Endothelial cell of umbilical vein (primary cell): ENCODE measurements at regions of chr3 and their contacts with region 1.

Region 1: DNA sequence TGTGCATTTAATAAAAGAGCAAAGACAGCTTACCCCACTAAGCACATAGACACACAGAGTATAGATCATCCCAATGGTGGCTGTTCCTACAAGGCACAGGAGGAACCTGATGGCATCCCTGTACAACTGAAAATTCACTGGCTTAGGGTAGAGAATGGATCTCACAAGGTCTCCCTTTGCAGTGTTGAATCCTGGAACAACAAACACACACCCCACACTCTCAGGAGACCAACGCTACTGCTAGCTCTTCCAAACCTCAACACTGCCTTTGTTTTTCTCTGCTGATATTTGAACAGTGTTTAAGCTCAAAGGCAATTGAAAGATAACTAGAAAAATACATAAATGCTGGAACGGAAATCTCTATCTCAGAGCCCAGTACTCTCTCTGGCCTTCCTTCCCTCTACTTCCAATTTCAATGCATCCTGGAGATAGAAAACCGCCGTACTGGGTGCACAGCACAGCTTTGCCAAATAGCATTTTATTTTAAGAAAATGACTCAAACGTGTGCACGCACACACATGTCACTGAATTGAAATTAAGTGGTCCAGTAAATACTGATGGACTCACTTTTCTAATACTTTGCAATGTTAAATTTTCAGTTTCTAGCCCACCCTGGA is 87.5 kb upstream of the ATP13A5 start:
- DNase-seq: no peak
- H3K4me3 ChIP-seq: no peak overlapping the region
- H3K27ac ChIP-seq: no peak overlapping the region
- H3K4me1 ChIP-seq: peaks cover 5% of the 10 kb centered on the region
- H3K27me3 ChIP-seq: peaks cover 0 to 2% of the 10 kb centered on the region in 2 experiments
- CTCF ChIP-seq: no peak
- POLR2A ChIP-seq: no peak

Region 2: GRCh38 chr3:193190146-193190786 is 275.8 kb before region 1 on chr3:
- CTCF ChIA-PET with region 1: no interaction called
- POLR2A ChIA-PET with region 1: no interaction called
- dilution Hi-C with region 1: no loop called
- intact Hi-C with region 1: loop called (anchors 2 kb)
- DNase-seq: peak; percentile 56
- H3K4me3 ChIP-seq: no peak overlapping the region
- H3K27ac ChIP-seq: no peak overlapping the region
- H3K4me1 ChIP-seq: no peaks in the 10 kb centered on the region
- H3K27me3 ChIP-seq: peaks cover 0 to 9% of the 10 kb centered on the region in 2 experiments
- CTCF ChIP-seq: peak; percentile 45 to 59
- POLR2A ChIP-seq: no peak

Region 3: GRCh38 chr3:193240850-193241706 is 225.0 kb before region 1 on chr3 and contains the start of gene PLAAT1:
- CTCF ChIA-PET with region 1: no interaction called
- POLR2A ChIA-PET with region 1: no interaction called
- dilution Hi-C with region 1: no loop called
- intact Hi-C with region 1: loop called (anchors 5 kb)
- DNase-seq: peak; percentile 62
- H3K4me3 ChIP-seq: peak within 1 kb of the TSS in 2 of 3 experiments; percentile 52 to 66
- H3K27ac ChIP-seq: no peak within 1 kb of the TSS
- H3K4me1 ChIP-seq: peaks cover 5% of the 10 kb centered on the region
- H3K27me3 ChIP-seq: peaks cover 3 to 15% of the 10 kb centered on the region in 2 experiments
- CTCF ChIP-seq: no peak
- POLR2A ChIP-seq: no peak
- total RNA-seq, gene PLAAT1: 0.58 and 0.75 TPM in 2 replicates

Region 4: DNA sequence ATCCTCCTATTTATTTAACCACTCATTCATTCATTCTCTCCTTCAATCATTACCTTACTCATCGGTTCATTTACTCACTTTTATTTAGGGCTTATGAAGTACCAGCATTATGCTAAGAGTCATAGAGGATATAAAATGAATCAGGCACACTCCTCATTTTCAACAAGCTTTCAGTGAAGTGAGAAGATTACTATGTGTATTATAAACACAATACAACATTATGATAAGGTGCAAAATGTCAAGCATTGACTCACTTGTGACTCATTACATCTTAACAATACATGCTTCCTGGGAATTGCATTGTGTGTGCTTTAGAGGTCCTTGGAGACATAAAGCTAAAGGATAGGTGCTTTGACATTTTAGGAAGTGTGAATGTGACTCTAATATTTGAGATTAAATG is 164.7 kb before region 1 on chr3:
- CTCF ChIA-PET with region 1: no interaction called
- POLR2A ChIA-PET with region 1: no interaction called
- dilution Hi-C with region 1: no loop called
- intact Hi-C with region 1: loop called (anchors 2 kb)
- DNase-seq: peak; percentile 85
- H3K4me3 ChIP-seq: no peak overlapping the region
- H3K27ac ChIP-seq: no peak overlapping the region
- H3K4me1 ChIP-seq: peaks cover 8% of the 10 kb centered on the region
- H3K27me3 ChIP-seq: no peaks in the 10 kb centered on the region
- CTCF ChIP-seq: no peak
- POLR2A ChIP-seq: no peak

Region 5: DNA sequence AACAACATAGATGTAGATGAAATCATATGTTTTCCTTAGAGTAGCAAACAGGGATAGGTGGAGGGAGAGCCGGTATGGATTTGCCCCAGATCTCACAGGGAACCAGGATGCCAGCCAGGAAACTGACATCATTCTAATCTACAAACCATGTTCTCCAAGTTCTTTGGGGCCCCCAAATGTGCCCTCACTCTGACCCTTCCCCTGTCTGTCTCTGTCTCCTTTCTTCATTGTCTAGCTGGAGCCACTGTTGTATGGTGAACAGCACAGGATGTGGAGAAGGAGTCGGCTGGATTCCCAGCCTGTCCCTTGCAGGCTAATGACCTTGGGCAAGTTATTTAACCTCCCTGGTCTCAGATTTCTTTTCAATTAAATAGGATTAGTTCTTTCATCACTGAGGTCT is 88.5 kb before region 1 on chr3:
- CTCF ChIA-PET with region 1: no interaction called
- POLR2A ChIA-PET with region 1: no interaction called
- dilution Hi-C with region 1: no loop called
- intact Hi-C with region 1: no loop called
- DNase-seq: peak; percentile 8
- H3K4me3 ChIP-seq: no peak overlapping the region
- H3K27ac ChIP-seq: no peak overlapping the region
- H3K4me1 ChIP-seq: no peaks in the 10 kb centered on the region
- H3K27me3 ChIP-seq: no peaks in the 10 kb centered on the region
- CTCF ChIP-seq: no peak
- POLR2A ChIP-seq: no peak